ENCODE measurements at regions of chr18 and their contacts with region 1.

Region 1: GRCh38 chr18:21600526-21601410 is at the start of gene ESCO1:
- DNase-seq: peak; percentile 87 to 99 (median 92)
- ATAC-seq: peak; percentile 87
- H3K4me3 ChIP-seq: peak within 1 kb of the TSS; percentile 88 to 100
- H3K4me3 Mint-ChIP-seq: peak within 1 kb of the TSS; percentile 95
- H3K27ac ChIP-seq: peak within 1 kb of the TSS; percentile 98 to 100
- H3K27ac Mint-ChIP-seq: peak within 1 kb of the TSS; percentile 98
- H3K4me1 ChIP-seq: peaks cover 24% of the 10 kb centered on the region
- H3K4me1 Mint-ChIP-seq: peaks cover 41% of the 10 kb centered on the region
- H3K27me3 ChIP-seq: no peaks in the 10 kb centered on the region
- H3K27me3 Mint-ChIP-seq: no peaks in the 10 kb centered on the region
- CTCF ChIP-seq: peak; percentile 97
- total RNA-seq, gene ESCO1: 37.3 to 38.8 TPM

Region 2: DNA sequence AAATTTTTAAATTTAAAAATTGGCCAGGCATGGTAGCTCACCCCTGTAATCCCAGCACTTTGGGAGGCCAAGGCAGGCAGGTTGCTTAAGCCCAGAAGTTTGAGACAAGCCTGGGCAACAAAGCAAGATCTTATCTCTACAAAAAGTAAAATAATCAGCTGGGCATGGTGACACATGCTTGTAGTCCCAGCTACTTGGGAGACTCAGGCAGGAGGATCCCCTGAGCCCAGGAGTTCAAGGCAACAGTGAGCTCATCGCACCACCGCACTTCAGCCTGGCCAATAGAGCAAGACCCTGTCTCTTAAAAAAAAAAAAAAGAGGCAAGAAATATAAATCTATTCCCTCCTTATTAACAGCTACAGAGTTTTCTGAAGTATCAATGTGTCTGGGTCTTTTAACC is 52.1 kb before region 1 on chr18:
- CTCF ChIA-PET with region 1: no interaction called
- POLR2A ChIA-PET with region 1: no interaction called
- intact Hi-C with region 1: loop called in 1 of 2 experiments (anchors 10 kb)
- DNase-seq: no peak
- ATAC-seq: no peak
- H3K4me3 ChIP-seq: no peak overlapping the region
- H3K4me3 Mint-ChIP-seq: no peak overlapping the region
- H3K27ac ChIP-seq: no peak overlapping the region
- H3K27ac Mint-ChIP-seq: no peak overlapping the region
- H3K4me1 ChIP-seq: no peaks in the 10 kb centered on the region
- H3K4me1 Mint-ChIP-seq: peaks cover 4% of the 10 kb centered on the region
- H3K27me3 ChIP-seq: no peaks in the 10 kb centered on the region
- H3K27me3 Mint-ChIP-seq: no peaks in the 10 kb centered on the region
- CTCF ChIP-seq: no peak

Region 3: DNA sequence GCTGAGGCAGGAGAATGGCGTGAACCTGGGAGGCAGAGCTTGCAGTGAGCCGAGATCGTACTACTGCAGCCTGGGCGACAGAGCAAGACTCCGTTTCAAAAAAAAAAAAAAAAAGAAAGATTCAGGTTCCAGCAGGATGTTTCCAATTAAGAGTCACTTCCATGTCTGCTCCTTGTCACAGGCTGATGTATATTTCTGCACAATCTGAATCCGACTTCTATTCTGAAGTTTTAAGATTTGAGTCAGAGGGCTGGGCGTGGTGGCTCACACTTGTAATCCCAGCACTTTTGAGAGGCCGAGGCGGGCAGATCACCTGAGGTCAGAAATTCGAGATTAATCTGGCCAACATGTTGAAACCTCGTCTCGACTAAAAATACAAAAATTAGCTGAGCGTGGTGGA is 36.0 kb after region 1 on chr18:
- CTCF ChIA-PET with region 1: interaction called, 7 read pairs
- POLR2A ChIA-PET with region 1: interaction called, 12 read pairs
- intact Hi-C with region 1: no loop called
- DNase-seq: no peak
- ATAC-seq: no peak
- H3K4me3 ChIP-seq: no peak overlapping the region
- H3K4me3 Mint-ChIP-seq: no peak overlapping the region
- H3K27ac ChIP-seq: no peak overlapping the region
- H3K27ac Mint-ChIP-seq: no peak overlapping the region
- H3K4me1 ChIP-seq: no peaks in the 10 kb centered on the region
- H3K4me1 Mint-ChIP-seq: no peaks in the 10 kb centered on the region
- H3K27me3 ChIP-seq: no peaks in the 10 kb centered on the region
- H3K27me3 Mint-ChIP-seq: no peaks in the 10 kb centered on the region
- CTCF ChIP-seq: no peak

Region 4: DNA sequence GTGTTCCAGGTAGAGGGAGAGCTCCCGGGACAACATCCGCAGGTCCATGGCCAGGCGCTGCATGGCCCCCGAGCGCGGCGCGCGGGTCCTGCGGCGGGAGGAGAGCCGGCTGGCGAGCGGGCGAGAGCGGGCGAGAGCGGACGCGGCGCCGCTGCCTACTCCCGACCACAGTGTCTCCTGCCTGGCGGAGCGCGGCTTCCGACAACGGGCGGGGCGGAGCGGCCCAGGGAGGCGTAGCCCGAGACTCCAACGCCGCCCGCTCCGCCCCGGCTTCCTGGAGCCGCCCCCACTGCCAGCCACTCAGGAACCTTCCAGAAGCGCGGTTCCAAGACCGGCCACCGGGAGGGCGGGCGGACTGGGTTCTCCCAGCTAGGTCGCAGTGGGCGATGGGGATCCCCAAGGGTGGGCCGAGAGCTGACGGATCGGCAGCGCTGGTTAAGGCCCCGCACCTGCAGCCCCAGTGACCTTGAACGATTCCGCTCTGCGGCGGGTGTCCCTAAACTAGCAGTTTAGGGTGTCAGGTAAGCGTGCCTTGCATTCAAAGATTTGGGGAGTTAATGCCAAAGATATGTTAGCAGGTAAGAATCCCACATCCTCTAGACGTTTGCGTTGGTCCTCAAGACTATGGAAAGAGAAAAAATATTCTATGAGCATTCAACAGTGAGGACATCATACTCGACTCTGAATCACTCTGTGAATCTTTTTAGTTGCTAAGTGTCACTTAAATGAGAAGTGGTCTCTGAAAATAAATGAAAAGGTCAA is 104.0 kb after region 1 on chr18 and contains the start of gene ABHD3:
- CTCF ChIA-PET with region 1: interaction called, 5 read pairs
- POLR2A ChIA-PET with region 1: interaction called, 25 read pairs
- intact Hi-C with region 1: loop called (anchors 1 to 2 kb)
- DNase-seq: peak; percentile 83 to 96 (median 91)
- ATAC-seq: peak; percentile 92
- H3K4me3 ChIP-seq: peak within 1 kb of the TSS; percentile 81 to 99
- H3K4me3 Mint-ChIP-seq: peak within 1 kb of the TSS; percentile 96
- H3K27ac ChIP-seq: peak within 1 kb of the TSS; percentile 66 to 82
- H3K27ac Mint-ChIP-seq: peak within 1 kb of the TSS; percentile 94
- H3K4me1 ChIP-seq: peaks cover 25% of the 10 kb centered on the region
- H3K4me1 Mint-ChIP-seq: peaks cover 39% of the 10 kb centered on the region
- H3K27me3 ChIP-seq: no peaks in the 10 kb centered on the region
- H3K27me3 Mint-ChIP-seq: no peaks in the 10 kb centered on the region
- CTCF ChIP-seq: peak; percentile 41
- total RNA-seq, gene ABHD3: 28.9 to 34.3 TPM

Region 5: GRCh38 chr18:23452728-23453679 is 1852.2 kb after region 1 on chr18 and contains the start of gene RIOK3:
- CTCF ChIA-PET with region 1: no interaction called
- POLR2A ChIA-PET with region 1: no interaction called
- intact Hi-C with region 1: loop called in 1 of 2 experiments (anchors 5 kb)
- DNase-seq: peak; percentile 71 to 93 (median 85)
- ATAC-seq: peak; percentile 90
- H3K4me3 ChIP-seq: peak within 1 kb of the TSS; percentile 69 to 97
- H3K4me3 Mint-ChIP-seq: peak within 1 kb of the TSS; percentile 99
- H3K27ac ChIP-seq: peak within 1 kb of the TSS; percentile 65 to 85
- H3K27ac Mint-ChIP-seq: peak within 1 kb of the TSS; percentile 94
- H3K4me1 ChIP-seq: peaks cover 32% of the 10 kb centered on the region
- H3K4me1 Mint-ChIP-seq: peaks cover 49% of the 10 kb centered on the region
- H3K27me3 ChIP-seq: no peaks in the 10 kb centered on the region
- H3K27me3 Mint-ChIP-seq: no peaks in the 10 kb centered on the region
- CTCF ChIP-seq: no peak
- total RNA-seq, gene RIOK3: 159 to 185 TPM

Measured in CD8-positive, alpha-beta T cell (primary cell).